ENCODE measurements at regions of chr1 and their contacts with region 1.

Region 1: GRCh38 chr1:201481761-201482493 is 12.9 kb upstream of the PHLDA3 start:
- DNase-seq: peak; percentile 95

Region 2: DNA sequence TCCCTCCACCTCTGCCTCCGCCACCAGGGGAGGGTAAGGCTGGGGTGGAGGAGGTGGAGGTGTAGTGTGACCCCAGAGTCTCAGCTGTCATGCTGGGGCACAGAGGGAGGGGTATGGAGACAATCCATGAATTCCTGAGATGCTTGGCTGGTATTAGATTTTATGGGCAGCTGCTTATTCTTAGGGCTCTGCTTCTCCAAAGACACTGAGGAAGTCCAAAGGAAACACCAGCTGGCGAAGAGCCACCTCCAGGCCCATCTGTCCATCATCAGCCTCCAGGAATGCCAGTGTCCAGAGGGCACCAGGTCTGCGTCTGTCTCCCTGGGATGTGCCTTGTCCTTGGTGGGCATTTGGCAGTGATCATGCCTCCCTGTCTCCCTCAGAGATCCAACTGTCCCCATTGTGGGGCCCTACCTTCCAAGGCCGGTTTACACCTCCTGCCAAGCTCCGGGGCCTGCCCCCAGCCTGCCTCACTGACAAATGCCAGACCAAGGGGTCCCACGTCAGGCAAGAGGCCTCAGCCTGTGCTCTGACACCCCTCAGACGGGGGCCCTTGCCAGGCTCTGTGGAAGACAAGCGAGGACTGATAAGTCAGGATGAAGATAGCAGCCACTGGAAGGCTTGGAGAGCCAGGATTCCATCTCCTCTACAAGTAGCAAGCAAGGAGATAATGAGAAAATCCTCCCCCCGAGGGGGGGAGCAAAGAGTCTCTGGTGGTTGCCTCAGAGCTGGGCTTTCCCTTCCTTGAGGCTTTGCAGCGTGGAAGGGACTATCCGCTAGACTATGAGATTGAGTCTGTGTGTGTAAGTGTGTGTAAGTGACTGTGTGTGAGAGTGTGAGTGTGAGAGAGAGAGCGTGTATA is 62.0 kb before region 1 on chr1:
- CTCF ChIA-PET with region 1: no interaction called
- POLR2A ChIA-PET with region 1: no interaction called
- DNase-seq: no peak

Region 3: GRCh38 chr1:201436393-201436792 is 45.5 kb before region 1 on chr1:
- CTCF ChIA-PET with region 1: interaction called, 30 read pairs
- POLR2A ChIA-PET with region 1: no interaction called
- DNase-seq: peak; percentile 63

Region 4: DNA sequence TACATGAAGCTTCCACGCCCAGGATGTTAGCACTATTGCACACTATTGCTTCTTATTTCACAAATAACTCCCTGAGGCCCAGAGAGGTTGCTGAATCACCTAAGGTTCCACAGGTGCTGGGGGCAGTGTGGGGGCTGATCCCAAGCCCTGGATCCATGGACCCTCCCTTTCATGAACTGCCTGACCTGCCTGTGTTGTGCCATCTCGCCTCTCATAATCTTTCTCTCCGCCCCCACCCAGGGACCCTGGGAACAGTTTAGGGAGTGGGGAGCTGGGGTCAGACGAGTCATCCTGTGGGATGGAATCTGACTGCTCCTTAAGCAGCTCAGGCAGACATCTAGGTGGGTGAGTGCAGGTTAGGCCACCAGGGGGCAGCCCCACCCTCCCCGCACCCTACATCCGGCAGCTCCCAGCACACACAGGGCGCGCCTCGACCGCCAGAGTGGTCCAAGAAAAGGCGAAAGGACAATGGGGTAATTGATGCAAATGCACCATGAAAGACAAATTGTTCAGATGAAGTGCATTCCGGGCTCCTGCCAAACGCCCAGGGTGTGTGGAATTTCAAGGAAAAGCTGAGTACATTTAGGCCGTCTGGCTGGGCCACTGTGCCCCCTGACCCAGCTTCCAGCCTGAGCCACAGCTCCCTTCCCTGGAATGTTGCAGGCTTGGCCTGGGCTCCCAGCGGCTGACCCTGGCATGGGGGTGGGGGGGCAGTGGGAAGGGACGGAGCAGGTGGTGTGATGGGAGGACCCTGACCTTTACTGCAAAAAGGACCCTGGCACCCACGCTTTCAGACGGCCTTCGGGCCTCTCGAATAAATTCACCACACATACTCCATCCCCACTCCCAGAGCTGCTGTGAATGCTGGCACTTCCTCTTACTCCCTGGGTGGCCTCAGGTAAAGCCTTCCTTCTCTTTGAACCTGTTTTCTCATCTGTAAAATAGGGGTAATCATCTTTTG is 33.7 kb before region 1 on chr1:
- CTCF ChIA-PET with region 1: interaction called, 45 read pairs
- POLR2A ChIA-PET with region 1: interaction called, 3 read pairs
- DNase-seq: peak; percentile 85

Region 5: GRCh38 chr1:201500670-201501120 is 18.8 kb after region 1 on chr1:
- CTCF ChIA-PET with region 1: interaction called, 30 read pairs
- POLR2A ChIA-PET with region 1: interaction called, 3 read pairs
- DNase-seq: no peak

Region 6: GRCh38 chr1:201551877-201552731 is 70.2 kb after region 1 on chr1:
- CTCF ChIA-PET with region 1: no interaction called
- POLR2A ChIA-PET with region 1: no interaction called
- DNase-seq: no peak